A549 (cell line): ENCODE measurements at regions of chr17 and their contacts with region 1.

Region 1: DNA sequence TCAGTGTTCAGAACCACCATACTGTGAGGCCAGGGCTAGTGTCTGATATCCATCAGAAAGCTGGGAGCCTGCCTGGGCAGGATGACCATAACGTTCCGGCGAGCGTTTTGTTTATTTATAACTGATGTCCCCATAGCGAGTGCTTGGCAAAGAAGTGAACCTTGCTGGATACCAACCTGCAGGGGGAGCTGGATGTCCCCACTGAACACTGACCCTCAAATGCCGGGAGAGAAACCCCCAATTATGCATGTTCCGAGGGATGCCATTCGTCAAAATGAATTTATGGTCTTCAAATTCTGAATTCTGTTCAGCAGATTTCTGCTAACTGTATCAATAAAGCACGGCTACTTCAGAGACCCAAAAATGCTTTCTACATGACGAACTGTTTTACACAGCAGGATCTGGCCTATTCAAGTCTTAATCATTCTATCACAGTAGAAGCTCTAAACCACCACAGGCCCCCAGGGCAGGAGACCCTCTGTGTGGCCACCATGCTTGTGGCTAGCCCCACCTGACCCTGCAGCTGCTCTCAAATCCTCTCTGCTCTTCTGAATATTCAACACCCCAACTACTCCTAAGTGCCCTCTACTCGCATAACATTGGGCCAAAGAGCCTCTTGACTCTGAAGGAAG is 15.2 kb downstream of the MED24 start:
- DNase-seq: peak; percentile 56 to 68
- ATAC-seq: peak; percentile 80 to 88
- H3K4me3 ChIP-seq: no peak overlapping the region
- H3K27ac ChIP-seq: peak overlapping the region in 1 of 2 experiments; percentile 25; a peak in 1 of 6 replicates
- H3K4me1 ChIP-seq: 0 out of 3 replicates have a peak, but pooled peaks cover 7% of the 10 kb centered on the region
- CTCF ChIP-seq: peak; percentile 67
- EP300 ChIP-seq: no peak
- POLR2A ChIP-seq: no peak
- RAD21 ChIP-seq: peak; percentile 54 to 63

Region 2: GRCh38 chr17:40062329-40063186 is 23.6 kb after region 1 on chr17 and contains the start of gene THRA:
- CTCF ChIA-PET with region 1: interaction called, 12 read pairs
- POLR2A ChIA-PET with region 1: no interaction called
- DNase-seq: peak in 1 of 2 experiments; percentile 68
- ATAC-seq: peak; percentile 65 to 70
- H3K4me3 ChIP-seq: peak within 1 kb of the TSS; percentile 98
- H3K27ac ChIP-seq: peak within 1 kb of the TSS; percentile 92 to 98
- H3K4me1 ChIP-seq: peaks cover 33% of the 10 kb centered on the region
- CTCF ChIP-seq: peak; percentile 86
- EP300 ChIP-seq: no peak
- POLR2A ChIP-seq: no peak
- RAD21 ChIP-seq: no peak; a peak in 3 of 5 replicates
- polyA plus RNA-seq, gene THRA: 20.1 and 27.4 TPM in 2 replicates

Region 3: DNA sequence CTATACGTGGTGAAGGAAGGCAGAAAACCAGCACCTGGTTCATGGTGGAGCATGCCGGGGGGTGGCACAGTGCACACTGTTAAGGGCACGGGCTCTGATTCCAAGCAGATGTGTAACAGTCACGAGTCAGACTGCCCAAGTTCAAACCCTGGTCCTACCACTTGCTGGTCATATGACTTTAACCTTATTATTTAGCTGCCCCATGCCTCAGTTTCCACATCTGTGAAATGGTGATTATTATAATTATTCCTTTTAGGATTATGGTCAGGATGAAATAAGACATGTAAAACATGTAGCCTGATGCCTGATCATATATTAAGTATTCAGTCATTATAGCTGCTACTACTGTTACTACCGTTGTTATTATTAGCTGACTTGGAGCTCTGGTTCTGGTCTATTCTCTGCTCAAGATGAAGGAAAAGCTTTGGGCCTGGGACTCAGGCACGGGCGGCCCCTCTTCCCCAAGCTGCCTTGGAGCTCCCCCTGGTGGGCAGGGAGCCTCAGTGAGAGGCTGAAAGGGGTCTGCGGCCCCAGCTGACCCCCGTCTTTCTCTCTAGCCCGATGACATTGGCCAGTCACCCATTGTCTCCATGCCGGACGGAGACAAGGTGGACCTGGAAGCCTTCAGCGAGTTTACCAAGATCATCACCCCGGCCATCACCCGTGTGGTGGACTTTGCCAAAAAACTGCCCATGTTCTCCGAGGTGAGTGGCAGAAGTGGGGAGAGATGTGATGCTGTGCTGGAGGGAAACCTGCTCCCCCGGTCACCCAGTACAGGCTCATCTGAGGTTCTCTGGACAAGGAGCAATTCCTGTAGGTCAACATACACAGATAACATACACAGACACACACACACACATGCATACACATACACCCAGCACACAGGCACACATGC is 47.4 kb after region 1 on chr17:
- CTCF ChIA-PET with region 1: interaction called, 103 read pairs
- POLR2A ChIA-PET with region 1: no interaction called
- DNase-seq: peak; percentile 70 to 85
- ATAC-seq: peak; percentile 52 to 84; a peak in 4 of 6 replicates
- H3K4me3 ChIP-seq: no peak overlapping the region
- H3K27ac ChIP-seq: no peak overlapping the region
- H3K4me1 ChIP-seq: peaks cover 15% of the 10 kb centered on the region
- CTCF ChIP-seq: peak; percentile 95
- EP300 ChIP-seq: no peak
- POLR2A ChIP-seq: no peak
- RAD21 ChIP-seq: peak; percentile 97